Activated naive CD4-positive, alpha-beta T cell treated with anti-CD3 and anti-CD28 coated beads for 36 hours (primary cell): ENCODE measurements at regions of chr15 and their contacts with region 1.

Region 1: GRCh38 chr15:40338041-40338657 is 2.6 kb downstream of the CCDC9B start:
- DNase-seq: peak; percentile 82
- H3K4me3 Mint-ChIP-seq: no peak overlapping the region
- H3K27ac Mint-ChIP-seq: no peak overlapping the region
- H3K4me1 Mint-ChIP-seq: peaks cover 17% of the 10 kb centered on the region
- H3K27me3 Mint-ChIP-seq: no peaks in the 10 kb centered on the region

Region 2: GRCh38 chr15:40282144-40282868 is 55.8 kb before region 1 on chr15:
- CTCF ChIA-PET with region 1: interaction called, 246 read pairs
- intact Hi-C with region 1: loop called (anchors 1 kb)
- DNase-seq: peak; percentile 38
- H3K4me3 Mint-ChIP-seq: peak overlapping the region; percentile 62
- H3K27ac Mint-ChIP-seq: no peak overlapping the region
- H3K4me1 Mint-ChIP-seq: peaks cover 5% of the 10 kb centered on the region
- H3K27me3 Mint-ChIP-seq: peaks cover 28% of the 10 kb centered on the region

Region 3: DNA sequence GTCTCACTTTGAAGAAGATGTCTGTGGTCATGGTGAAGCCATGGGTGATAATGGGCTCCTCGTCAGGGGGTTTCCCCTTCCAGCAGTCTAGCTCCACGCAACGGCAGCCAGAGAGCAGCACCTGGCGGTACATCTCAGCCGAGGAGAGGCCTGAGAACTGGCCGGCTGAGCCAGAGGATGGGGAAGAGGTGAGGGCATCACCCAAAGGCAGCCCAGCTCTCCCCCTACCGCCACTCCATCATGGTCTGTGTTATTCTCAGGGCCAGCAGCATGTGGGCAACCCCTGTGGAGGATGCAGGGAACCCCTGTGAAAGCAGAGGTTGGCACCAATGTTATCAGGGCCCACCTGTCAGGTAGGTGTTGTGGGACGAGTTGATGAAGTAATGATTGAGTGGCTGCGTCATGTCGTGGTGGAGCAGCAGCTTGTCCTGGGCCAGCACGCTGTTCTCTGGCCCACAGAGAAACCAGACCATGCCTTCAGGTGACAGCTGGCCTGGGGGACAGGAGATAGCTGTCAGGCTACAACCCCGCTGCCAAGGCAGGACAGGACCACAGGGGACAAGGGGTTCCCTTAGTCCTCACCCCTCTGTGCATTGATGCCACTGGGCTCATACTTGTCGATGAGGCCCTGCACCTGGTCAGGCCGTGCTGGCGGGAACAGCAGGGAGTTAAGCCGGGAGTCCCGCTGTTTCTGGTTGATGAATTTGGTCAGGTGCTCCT is 39.8 kb before region 1 on chr15:
- CTCF ChIA-PET with region 1: no interaction called
- intact Hi-C with region 1: no loop called
- DNase-seq: no peak
- H3K4me3 Mint-ChIP-seq: no peak overlapping the region
- H3K27ac Mint-ChIP-seq: no peak overlapping the region
- H3K4me1 Mint-ChIP-seq: no peaks in the 10 kb centered on the region
- H3K27me3 Mint-ChIP-seq: no peaks in the 10 kb centered on the region

Region 4: GRCh38 chr15:40357723-40358470 is 19.7 kb after region 1 on chr15 and contains the start of gene DISP2:
- CTCF ChIA-PET with region 1: interaction called, 23 read pairs
- intact Hi-C with region 1: no loop called
- DNase-seq: peak; percentile 90
- H3K4me3 Mint-ChIP-seq: peak within 1 kb of the TSS; percentile 72
- H3K27ac Mint-ChIP-seq: no peak within 1 kb of the TSS
- H3K4me1 Mint-ChIP-seq: peaks cover 2% of the 10 kb centered on the region
- H3K27me3 Mint-ChIP-seq: peaks cover 5% of the 10 kb centered on the region
- total RNA-seq, gene DISP2: 0.02 TPM in 1 of 2 experiments, not detected in the other

Region 5: DNA sequence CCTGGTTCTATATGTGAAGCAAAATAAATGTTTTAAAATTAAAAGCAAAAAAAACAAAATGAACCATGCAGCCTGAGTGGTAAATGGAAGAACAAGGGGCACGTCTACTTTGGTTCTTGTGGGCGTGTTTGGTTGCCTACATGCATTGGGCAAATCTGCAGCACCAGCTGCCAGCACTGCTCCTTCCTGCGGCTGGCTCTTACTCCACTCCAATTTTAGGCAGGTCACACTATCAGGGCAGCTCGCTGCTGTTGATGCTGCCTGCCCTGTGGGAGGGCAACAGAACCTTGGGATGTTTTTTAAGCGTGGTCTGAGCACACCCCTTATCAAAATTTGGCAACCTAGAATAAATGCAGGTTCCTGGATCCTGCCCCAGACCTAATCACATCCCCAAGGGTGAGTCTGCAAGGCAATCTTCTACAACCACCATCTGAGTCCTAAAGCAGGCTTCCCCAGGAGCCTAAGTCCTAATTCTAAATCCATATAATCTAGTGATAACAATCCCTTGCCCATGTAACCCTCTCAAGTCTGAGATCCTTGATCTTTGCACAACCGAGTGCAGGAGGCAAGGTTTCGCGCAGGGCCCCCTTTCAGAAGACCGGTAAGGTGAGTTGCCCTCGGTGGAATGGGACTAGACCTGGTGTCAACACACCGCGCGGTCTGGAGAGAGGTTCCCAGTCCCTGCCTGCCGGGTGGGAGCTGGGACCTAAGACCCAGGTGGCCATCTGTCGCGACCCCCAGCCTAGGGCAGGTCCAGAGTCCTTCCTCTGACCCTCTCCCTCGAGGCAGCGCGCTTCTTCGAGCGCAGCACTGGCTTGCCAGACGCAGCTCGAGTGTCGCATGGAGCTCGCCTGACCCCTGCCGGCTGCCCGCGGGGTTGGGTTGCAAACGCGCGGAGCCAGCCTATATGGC is 83.4 kb after region 1 on chr15:
- CTCF ChIA-PET with region 1: interaction called, 214 read pairs
- intact Hi-C with region 1: no loop called
- DNase-seq: peak; percentile 90
- H3K4me3 Mint-ChIP-seq: no peak overlapping the region
- H3K27ac Mint-ChIP-seq: no peak overlapping the region
- H3K4me1 Mint-ChIP-seq: no peaks in the 10 kb centered on the region
- H3K27me3 Mint-ChIP-seq: no peaks in the 10 kb centered on the region